Mammary epithelial cell (primary cell): ENCODE measurements at regions of chr13 and their contacts with region 1.

Region 1: DNA sequence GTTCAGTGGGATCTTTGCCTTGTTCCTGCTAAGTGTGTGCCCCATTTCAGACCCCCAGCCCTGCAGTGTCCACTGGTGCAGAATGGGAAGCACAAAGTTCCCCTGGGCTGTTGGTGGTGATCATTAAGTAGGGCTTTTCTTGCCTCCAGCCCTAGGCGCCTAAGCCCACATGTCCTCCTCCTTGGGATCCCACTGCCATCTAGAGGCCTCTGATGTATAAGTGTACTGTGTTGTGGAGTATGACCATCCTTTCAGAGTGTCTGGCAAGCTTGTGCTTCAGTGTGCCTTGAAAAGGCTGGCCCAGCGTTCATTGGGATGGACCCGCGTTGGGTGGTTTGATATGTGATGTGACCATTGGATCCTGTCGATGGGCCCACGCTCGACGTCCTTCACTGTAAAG is 71.2 kb downstream of the WASF3 start:
- DNase-seq: peak; percentile 27
- H3K4me3 ChIP-seq: no peak overlapping the region
- H3K27ac ChIP-seq: no peak overlapping the region
- H3K4me1 ChIP-seq: no peaks in the 10 kb centered on the region
- H3K27me3 ChIP-seq: no peaks in the 10 kb centered on the region
- CTCF ChIP-seq: peak; percentile 23 to 60

Region 2: DNA sequence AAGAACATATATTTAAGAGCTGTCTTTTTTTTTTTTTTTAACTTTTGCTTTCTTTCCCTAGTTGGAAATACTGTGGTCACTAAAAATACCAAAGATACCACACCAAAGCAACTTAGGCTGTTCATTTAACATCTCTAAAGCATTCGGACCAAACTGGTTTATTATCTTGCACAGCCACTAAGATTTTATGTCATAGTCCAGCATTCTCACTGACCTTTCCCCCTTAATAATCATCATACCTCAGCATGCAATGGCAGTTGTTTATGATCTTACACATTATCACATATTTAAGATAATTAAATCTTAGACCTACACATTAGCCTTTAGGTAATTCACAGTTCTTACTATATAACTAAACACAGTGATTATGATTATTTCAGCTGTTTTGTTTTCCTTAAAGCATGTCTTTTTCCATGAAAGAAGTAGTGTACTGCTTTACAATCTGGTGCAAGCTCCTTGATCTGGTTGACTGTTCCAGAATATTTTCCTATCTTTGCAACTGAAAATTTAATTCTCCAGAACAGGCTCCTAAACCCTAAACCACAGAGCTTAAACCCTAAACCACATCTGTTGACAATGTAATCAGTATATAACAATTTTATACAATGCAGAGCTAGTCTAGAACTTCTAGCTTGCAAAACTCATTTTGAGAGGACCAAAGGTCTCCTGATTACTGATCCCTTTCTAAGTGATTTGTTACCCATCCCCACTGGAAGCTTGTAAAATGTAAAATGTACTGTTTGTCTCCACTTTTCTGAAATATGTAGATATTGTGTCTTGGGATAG is 300.6 kb before region 1 on chr13:
- CTCF ChIA-PET with region 1: no interaction called
- dilution Hi-C with region 1: no loop called
- in situ Hi-C with region 1: no loop called
- intact Hi-C with region 1: no loop called
- DNase-seq: no peak
- H3K4me3 ChIP-seq: no peak overlapping the region
- H3K27ac ChIP-seq: no peak overlapping the region
- H3K4me1 ChIP-seq: no peaks in the 10 kb centered on the region
- H3K27me3 ChIP-seq: no peaks in the 10 kb centered on the region
- CTCF ChIP-seq: no peak

Region 3: DNA sequence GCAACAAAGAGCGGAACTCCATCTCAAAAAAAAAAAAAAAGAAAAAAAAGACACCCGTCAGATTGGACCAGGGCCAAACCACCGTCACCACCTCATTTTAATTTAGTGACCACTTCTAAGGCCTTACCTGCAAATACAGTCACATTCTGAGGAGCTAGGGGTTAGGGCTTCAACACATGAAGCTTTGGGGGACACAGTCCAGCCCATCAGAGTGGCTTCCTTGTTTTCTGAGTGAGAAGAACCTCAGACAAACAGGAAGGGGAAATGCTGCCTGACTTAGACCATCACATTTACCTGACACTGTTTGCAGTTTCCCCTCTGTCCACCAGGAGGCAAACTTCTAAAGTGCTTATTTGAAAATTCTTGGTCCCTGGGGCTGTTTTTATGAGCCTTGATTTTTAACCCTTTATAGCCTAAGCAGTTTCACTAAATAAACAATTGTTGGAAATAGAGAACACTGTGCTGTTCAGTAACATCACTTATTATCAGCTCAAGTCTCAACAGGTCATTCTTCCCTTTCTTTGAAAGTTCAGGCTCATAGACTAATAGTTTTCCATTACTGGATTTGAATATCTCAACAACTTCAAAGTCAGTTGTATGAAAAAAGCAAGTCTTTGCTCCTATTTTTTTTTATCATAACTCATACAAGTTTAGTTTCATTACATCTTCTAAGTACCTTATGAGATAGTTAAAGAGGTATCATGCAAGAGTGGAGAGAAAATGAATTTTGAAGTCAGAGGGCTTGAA is 146.1 kb before region 1 on chr13:
- CTCF ChIA-PET with region 1: no interaction called
- dilution Hi-C with region 1: no loop called
- in situ Hi-C with region 1: loop called in 1 of 2 experiments (anchors 10 kb)
- intact Hi-C with region 1: loop called (anchors 1 kb)
- DNase-seq: peak; percentile 57
- H3K4me3 ChIP-seq: no peak overlapping the region
- H3K27ac ChIP-seq: no peak overlapping the region
- H3K4me1 ChIP-seq: no peaks in the 10 kb centered on the region
- H3K27me3 ChIP-seq: no peaks in the 10 kb centered on the region
- CTCF ChIP-seq: peak; percentile 84 to 88

Region 4: DNA sequence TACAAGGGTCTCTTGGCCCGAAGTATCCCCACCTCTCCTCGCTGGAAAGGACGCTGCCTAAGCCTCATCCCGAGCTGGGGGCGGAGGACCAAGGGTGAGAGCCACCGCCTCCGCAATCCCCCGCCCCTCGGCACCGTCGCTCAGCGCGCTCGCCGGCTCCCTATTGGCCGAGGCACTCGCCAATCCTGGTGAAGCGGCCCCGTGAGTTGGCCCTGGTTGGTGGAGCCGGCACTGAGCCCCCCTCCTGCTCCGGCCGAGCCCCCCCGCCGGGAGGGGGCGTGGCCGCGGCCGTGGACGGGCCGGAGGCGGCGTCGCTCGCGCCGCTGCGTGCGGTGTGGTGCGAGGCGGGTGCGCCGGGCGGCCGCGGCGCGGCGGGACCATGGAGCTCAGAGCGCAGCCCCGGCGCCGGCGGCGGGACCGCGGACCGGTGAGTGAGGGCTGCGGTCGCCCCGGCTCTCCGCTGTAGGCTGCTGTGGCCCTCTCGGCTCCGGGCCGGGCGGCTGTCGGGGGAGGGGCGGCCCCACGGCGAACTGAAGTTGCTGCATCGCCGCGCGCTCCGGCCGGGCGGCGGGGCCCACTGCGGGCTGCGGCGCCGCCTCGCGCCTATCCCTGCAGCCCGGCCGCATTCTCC is 71.2 kb before region 1 on chr13 and contains the start of gene WASF3:
- CTCF ChIA-PET with region 1: no interaction called
- dilution Hi-C with region 1: no loop called
- in situ Hi-C with region 1: no loop called
- intact Hi-C with region 1: loop called (anchors 2 kb)
- DNase-seq: peak; percentile 92
- H3K4me3 ChIP-seq: peak within 1 kb of the TSS; percentile 68 to 79 (median 74)
- H3K27ac ChIP-seq: no peak within 1 kb of the TSS
- H3K4me1 ChIP-seq: no peaks in the 10 kb centered on the region
- H3K27me3 ChIP-seq: no peaks in the 10 kb centered on the region
- CTCF ChIP-seq: no peak
- total RNA-seq, gene WASF3: 7.7 to 19.4 TPM